Heart right ventricle (tissue), 16 donors: ENCODE measurements at regions of chr4 and their contacts with region 1.

Region 1: DNA sequence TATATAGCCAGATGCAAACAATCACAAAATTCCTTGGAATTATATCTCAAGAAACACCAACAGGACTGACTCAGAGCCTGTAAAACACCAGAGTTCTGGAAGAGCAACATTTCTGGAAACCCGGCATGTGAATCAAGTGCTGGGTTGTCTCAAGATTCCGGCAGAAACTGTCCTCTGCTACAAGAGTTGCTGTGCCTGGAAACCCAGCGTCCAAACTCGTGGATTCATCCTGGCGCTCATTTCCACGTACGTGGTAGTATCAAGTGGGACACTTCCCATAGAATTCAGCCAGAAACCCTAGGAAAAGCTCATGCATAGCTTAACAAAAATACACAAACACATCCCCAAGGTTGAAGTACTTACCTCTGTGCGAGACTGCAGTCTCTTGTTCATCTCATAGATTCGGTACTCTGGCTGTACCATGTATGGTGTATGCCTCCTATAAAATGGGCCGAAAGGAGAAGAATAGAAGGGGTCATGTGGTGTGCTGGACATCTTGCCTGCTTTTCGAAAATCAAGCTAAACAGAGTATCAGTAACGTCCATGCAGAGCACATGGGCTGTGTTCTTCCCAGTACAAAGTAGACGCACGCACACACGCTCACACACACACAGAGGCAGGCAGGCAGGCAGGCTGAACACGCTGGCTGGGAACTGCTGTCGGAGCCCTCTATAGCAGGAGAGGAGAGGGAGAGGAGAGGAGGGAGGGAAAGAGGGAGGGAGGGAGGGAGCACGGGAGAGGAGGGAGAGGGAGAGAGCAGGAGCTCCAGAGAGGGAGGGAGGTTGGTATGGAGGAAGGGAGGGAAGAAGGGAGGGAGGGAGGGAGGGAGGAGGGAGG is at the start of gene LDB2:
- DNase-seq: peak; percentile 65 to 83
- ATAC-seq: peak; percentile 83 to 94 (median 90)
- H3K4me3 ChIP-seq: peak within 1 kb of the TSS; percentile 37 to 69 (median 60)
- H3K27ac ChIP-seq: peak within 1 kb of the TSS; percentile 53 to 86 (median 80)
- H3K4me1 ChIP-seq: peaks cover 0 to 24% (median 9%) of the 10 kb centered on the region in 9 donors
- H3K27me3 ChIP-seq: no peaks in the 10 kb centered on the region
- CTCF ChIP-seq: no peak
- total RNA-seq, gene LDB2: 14.5 to 43.3 (median 23.5) TPM

Region 2: DNA sequence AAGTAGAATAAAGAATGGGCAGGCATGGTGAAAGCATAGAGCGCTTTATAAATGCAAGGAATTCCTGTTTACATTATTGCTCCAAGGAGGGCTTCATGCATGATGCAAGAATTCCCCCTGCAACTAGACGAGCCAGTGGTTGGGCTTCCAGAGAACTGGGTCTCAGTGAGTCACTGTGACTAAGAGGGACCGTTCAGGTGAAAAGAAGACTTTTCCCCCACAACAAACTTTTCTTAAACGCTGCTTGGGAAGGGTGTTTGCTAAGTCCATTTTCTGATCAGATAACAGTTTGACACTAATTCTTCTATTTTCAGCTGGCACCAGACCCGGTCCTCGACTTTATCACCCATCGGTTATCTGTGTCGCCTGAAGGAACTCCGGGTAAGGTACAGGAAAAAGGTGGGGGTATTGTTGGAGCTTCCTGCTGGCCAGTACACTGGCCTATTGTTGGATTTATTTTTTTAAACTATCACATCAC is 39.9 kb before region 1 on chr4:
- intact Hi-C with region 1: loop called in 1 of 10 experiments (anchors 5 kb)
- DNase-seq: peak in 1 of 2 donors; percentile 69
- ATAC-seq: peak; percentile 79 to 94 (median 88)
- H3K4me3 ChIP-seq: no peak overlapping the region
- H3K27ac ChIP-seq: peak overlapping the region; percentile 54 to 86 (median 78)
- H3K4me1 ChIP-seq: peaks cover 4 to 77% (median 24%) of the 10 kb centered on the region in 9 donors
- H3K27me3 ChIP-seq: no peaks in the 10 kb centered on the region
- CTCF ChIP-seq: no peak

Region 3: DNA sequence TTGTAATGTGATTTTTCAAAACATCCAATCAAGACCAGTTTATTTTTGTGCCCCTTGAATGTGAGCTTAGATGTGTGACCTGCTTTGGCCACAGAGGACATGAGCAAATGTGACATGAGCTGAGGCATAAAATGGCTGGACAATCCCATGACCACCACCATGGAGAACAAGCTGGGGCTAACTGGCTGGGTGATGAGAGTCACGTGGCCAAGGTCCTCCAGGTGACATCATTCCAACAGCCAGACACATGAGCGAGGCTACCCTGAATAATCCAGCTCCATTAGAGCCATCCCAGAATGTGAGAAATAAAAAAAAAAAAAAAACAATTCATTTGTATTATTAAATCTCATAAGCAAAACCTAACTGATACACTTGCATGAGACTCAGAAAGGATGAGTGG is 90.6 kb after region 1 on chr4:
- intact Hi-C with region 1: no loop called
- DNase-seq: no peak
- ATAC-seq: no peak
- H3K4me3 ChIP-seq: no peak overlapping the region
- H3K27ac ChIP-seq: no peak overlapping the region
- H3K4me1 ChIP-seq: peaks cover 0 to 8% (median 0%) of the 10 kb centered on the region in 9 donors
- H3K27me3 ChIP-seq: no peaks in the 10 kb centered on the region
- CTCF ChIP-seq: no peak

Region 4: GRCh38 chr4:17662694-17663093 is 764.5 kb after region 1 on chr4:
- intact Hi-C with region 1: no loop called
- DNase-seq: no peak
- ATAC-seq: no peak
- H3K4me3 ChIP-seq: no peak overlapping the region
- H3K27ac ChIP-seq: no peak overlapping the region
- H3K4me1 ChIP-seq: peaks cover 0 to 12% (median 0%) of the 10 kb centered on the region in 9 donors
- H3K27me3 ChIP-seq: peaks cover 0 to 5% (median 0%) of the 10 kb centered on the region in 7 donors
- CTCF ChIP-seq: no peak